Pancreas (tissue), 10 donors: ENCODE measurements at regions of chr7 and their contacts with region 1.

Region 1: DNA sequence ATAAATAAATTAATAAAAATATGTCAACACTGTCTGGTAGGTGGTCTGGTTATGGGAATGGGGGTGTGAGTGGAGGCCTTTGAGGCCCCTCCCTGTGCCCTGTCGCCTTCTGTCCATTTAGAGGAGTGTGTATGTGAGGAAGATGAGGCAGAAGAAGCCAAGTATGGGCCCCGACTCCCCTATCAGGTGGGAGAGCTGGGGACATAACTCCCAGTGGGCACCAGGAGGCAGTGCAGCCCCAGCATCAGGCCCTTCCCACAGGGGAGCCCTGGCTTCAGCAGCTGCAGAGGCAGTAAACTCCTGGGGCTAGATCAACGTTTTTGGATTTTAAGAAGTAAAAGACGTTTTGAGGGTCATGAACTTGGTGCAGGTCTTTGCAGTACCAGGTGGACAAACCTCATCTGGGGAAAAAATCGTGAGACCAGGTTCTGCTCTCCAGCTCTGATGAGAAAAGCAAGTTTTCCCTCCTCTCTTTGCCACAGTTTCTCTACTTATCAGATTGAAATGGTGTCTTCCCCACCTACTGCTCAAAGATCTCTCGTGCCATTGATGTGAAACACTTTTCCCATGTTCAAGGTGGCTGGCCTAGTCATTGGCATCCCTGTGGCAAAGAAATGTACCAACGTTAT is 167.8 kb upstream of the EEPD1 start:
- DNase-seq: peak; percentile 74 to 92 (median 82)
- ATAC-seq: peak; percentile 79 to 95 (median 94)
- H3K4me3 ChIP-seq: no peak overlapping the region
- H3K27ac ChIP-seq: no peak overlapping the region
- H3K4me1 ChIP-seq: peaks cover 8 to 13% (median 8%) of the 10 kb centered on the region in 3 donors
- H3K27me3 ChIP-seq: no peaks in the 10 kb centered on the region
- CTCF ChIP-seq: peak; percentile 76 to 92 (median 90)

Region 2: DNA sequence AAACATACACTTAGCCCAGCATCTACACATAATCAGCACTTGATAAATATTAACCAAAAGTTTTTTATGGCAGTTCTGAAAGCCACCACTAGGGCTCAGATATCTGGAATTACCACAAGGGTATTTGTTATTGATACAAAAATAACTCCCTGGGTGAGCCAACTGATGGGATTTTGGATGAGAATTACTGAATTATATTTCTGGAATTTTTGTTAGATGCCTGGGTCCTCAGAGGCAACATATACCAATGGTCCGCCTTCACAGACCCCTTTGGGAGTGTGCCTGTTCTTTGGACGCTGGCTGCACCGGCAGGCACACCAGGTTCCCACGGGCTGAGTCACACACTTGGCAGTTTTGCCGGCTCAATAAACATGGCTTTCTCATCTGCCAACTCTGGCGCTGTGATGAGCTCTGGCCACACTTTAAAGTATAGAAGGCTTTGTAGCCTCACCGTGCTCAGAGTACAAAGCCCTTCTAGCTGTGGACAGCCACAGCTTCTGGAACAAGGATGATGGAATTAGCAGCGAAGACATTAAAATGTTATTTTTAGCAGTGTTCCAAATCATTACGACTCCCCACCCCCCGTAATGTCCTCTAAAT is 143.3 kb after region 1 on chr7:
- intact Hi-C with region 1: no loop called
- DNase-seq: peak; percentile 78 to 93 (median 92)
- ATAC-seq: peak; percentile 90 to 96 (median 94)
- H3K4me3 ChIP-seq: peak overlapping the region in 2 of 4 donors; percentile 1 to 19
- H3K27ac ChIP-seq: peak overlapping the region; percentile 69 to 90 (median 81)
- H3K4me1 ChIP-seq: peaks cover 11 to 23% (median 18%) of the 10 kb centered on the region in 3 donors
- H3K27me3 ChIP-seq: no peaks in the 10 kb centered on the region
- CTCF ChIP-seq: peak; percentile 67 to 84 (median 76)

Region 3: DNA sequence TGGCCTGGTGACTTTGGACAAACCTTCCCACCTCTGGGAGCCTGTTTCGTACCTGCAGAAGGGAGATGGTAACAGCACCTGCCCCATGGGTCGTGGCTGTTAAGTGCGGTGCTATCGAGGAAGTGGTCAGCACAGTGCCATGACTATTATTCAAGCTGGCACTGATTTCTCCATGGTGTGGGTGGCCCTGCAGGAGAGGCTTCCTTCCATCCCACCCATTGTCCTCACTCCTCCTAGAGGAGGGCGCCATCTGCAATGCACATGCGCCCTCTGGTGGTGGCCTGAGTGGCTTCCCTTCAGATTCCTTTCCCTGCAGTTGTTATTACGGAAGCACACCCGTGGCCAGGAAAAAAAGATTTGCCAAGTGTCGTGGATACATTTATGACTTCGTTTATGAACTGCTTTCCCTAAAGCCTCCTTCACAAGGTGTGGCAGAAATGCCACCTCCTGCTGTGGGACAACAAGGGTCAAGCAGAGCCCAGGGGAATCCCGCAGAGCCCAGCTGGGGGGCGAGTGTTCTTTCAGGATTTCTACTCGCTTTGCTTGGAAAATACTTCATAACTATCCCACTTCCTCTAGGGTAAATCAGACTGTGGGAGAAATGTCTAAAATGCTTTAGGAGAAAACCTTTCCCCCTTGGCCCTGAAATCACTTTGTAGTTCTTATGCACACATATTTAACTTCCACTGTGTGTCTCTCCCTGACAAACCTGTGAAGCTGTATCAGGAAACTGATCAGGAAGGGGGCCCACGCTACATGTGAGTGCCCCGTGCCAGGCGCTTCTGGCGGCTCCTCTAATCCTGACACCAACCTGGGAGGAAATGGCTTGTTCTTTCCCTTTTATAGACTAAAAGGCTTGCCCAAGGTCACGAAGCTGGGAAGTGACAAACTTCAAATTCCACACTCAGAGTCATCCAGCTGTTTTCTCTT is 306.4 kb after region 1 on chr7:
- intact Hi-C with region 1: loop called in 1 of 3 experiments (anchors 5 kb)
- DNase-seq: peak; percentile 82 to 94 (median 88)
- ATAC-seq: peak; percentile 77 to 90 (median 83)
- H3K4me3 ChIP-seq: peak overlapping the region in 2 of 4 donors; percentile 28 to 30
- H3K27ac ChIP-seq: peak overlapping the region; percentile 80 to 96 (median 92)
- H3K4me1 ChIP-seq: peaks cover 32 to 34% (median 33%) of the 10 kb centered on the region in 3 donors
- H3K27me3 ChIP-seq: no peaks in the 10 kb centered on the region
- CTCF ChIP-seq: peak; percentile 85 to 97 (median 96)

Region 4: GRCh38 chr7:36303202-36304098 is 318.2 kb after region 1 on chr7:
- intact Hi-C with region 1: loop called in 1 of 3 experiments (anchors 5 kb)
- DNase-seq: peak in 4 of 6 donors; percentile 76 to 90 (median 88)
- ATAC-seq: peak; percentile 80 to 91 (median 88)
- H3K4me3 ChIP-seq: no peak overlapping the region
- H3K27ac ChIP-seq: peak overlapping the region; percentile 35 to 79 (median 69)
- H3K4me1 ChIP-seq: peaks cover 14 to 18% (median 17%) of the 10 kb centered on the region in 3 donors
- H3K27me3 ChIP-seq: no peaks in the 10 kb centered on the region
- CTCF ChIP-seq: no peak

Region 5: DNA sequence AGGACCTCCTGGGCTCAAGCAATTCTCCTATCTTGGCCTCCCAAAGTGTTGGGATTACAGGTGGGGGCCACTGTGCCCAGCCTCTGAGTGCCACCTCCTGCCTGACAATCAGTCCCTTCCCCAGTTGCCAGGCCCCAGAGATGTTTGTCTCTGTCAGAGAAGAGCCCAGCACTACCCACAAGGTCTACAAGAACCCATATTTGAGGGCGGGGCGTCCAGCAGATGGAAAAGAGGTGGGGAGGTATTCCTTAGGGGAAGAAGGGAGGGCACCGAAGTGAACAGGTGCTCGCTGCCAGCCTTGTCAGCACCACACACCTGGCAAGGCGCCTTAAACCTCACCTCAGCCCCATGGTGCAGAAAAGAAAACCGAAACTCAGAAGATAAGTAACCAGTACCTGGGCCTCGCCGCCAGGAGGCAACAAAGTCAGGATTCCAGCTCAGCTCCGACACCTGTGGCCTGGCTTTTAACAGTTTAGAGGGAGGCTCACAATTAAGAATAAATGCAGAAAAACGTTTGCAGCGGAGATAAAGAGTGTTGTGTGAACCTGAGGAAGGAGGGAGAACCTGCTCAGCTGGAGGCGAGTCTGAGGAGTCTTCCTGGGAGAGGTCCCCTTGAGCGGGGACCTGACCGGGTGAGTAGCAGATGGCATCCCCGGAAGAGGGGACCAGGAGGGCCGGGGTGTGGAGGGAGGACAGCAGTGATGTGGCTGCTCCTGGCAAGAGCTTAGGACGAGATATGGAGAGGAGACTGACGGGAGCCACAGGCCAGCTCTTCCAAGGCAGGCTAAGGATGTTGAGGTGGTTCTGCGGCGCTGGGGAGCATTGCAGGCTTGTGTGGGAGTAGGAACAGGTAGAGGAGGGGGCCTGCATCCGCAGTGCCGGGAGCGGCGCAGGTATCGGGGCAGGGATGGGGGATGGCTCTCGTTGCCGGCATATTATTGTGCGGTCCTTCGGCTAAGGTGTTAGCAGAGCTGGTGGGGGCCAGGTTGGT is 327.4 kb after region 1 on chr7:
- intact Hi-C with region 1: loop called (anchors 5 to 10 kb)
- DNase-seq: peak; percentile 82 to 90 (median 83)
- ATAC-seq: peak; percentile 92 to 99 (median 98)
- H3K4me3 ChIP-seq: peak overlapping the region in 1 of 4 donors; percentile 10
- H3K27ac ChIP-seq: no peak overlapping the region
- H3K4me1 ChIP-seq: peaks cover 0 to 6% (median 0%) of the 10 kb centered on the region in 3 donors
- H3K27me3 ChIP-seq: no peaks in the 10 kb centered on the region
- CTCF ChIP-seq: peak; percentile 46 to 63 (median 47)

Region 6: DNA sequence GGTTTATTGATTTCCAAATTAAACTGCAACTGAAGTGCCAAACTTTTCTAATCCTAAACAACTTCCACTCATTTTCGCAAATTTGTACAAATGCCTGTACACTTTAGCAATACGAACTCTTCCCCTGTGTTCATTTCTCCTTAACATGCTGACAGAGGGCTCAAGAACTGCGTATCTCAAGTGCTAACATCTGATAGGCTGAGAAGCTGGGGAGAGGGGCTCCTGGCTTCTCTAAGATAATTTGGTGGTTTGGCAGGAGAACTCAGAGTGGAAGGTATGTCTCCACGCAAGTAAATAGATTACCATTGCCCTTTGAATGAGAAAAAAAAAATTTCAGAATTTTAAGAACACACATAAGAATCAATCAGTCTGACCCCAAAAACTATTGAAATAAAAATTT is 351.1 kb after region 1 on chr7:
- intact Hi-C with region 1: no loop called
- DNase-seq: no peak
- ATAC-seq: no peak
- H3K4me3 ChIP-seq: no peak overlapping the region
- H3K27ac ChIP-seq: no peak overlapping the region
- H3K4me1 ChIP-seq: no peaks in the 10 kb centered on the region
- H3K27me3 ChIP-seq: no peaks in the 10 kb centered on the region
- CTCF ChIP-seq: no peak

Region 7: DNA sequence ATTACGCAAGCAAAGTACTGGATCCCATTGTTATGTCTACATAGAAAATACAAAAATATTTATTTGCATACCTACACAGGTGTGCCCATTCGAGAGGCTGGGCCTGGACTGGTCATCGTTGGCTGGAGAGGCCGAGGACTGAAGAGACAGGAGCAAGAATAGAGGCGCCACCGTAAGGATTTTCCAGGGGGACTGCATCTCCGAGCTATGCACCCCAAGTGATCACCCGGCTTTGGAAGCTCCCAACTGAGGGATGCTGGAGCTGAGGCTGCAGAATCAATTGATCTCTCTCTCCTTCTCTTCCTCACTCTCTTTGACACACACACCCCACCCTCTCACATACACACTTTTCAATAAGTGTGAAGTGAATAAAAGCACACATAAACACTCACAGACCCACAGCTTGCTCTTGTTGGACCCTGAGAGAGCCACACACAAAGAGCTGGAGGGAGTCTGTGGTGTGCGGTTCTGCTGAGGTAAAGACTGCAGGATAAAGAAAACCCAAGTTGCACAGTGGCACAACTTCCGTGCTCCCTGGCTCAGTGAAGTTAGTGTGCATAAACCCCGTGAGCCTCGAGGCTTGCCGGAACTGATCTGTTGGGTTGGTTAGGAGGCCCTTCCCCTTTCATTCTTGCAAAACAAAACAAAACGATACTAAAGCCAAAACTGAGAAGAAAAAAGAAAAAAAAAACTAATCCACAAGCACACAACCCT is 738.9 kb after region 1 on chr7 and contains the start of gene AOAH:
- intact Hi-C with region 1: no loop called
- DNase-seq: peak in 1 of 6 donors; percentile 47
- ATAC-seq: peak in 3 of 4 donors; percentile 51 to 80 (median 77)
- H3K4me3 ChIP-seq: peak within 1 kb of the TSS in 1 of 4 donors; percentile 26
- H3K27ac ChIP-seq: no peak within 1 kb of the TSS
- H3K4me1 ChIP-seq: peaks cover 0 to 6% (median 0%) of the 10 kb centered on the region in 3 donors
- H3K27me3 ChIP-seq: no peaks in the 10 kb centered on the region
- CTCF ChIP-seq: no peak
- total RNA-seq, gene AOAH: 0.79 to 9.0 (median 1.7) TPM